OCI-LY7 (cell line): ENCODE measurements at regions of chr1 and their contacts with region 1.

Region 1: DNA sequence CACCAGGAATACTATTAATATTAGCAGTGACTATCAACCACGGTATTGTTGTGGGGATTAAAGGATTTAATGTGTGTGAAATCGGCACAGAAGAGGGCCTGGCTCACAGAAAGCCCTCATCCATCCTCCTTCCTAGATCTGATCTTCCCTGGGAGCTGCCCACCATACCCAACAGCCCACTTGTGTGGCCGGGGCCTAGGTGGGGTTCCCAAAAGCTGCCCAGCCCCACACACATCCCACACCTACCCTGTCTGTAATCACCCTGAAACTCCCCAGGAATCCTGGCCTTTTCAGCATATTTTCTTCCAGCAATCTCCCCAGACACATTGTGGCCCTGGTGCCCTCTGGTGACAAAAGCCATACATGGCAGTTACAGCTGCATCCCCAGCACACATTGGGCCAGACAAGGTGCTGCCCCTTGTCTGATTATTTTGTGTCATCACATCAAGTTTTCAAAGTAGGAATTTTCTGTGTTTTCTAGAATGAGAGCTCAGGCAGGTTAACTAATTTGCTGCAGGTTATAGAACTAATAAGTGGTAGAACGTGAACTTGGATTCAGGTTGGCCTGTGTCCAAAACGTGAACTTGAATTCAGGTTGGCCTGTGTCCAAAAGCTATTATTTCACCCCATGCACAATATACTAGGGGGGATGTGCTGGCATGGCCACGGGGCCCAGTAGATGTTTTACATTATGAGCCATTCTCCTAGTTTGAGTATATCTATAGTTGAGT is 5.3 kb upstream of the SLC6A9 start:
- DNase-seq: peak; percentile 74
- H3K4me3 ChIP-seq: no peak overlapping the region
- H3K27ac ChIP-seq: no peak overlapping the region
- H3K4me1 ChIP-seq: peaks cover 13% of the 10 kb centered on the region
- CTCF ChIP-seq: peak; percentile 91

Region 2: GRCh38 chr1:43529206-43529731 is 507.3 kb before region 1 on chr1:
- CTCF ChIA-PET with region 1: no interaction called
- POLR2A ChIA-PET with region 1: no interaction called
- intact Hi-C with region 1: loop called (anchors 5 kb)
- DNase-seq: peak; percentile 79
- H3K4me3 ChIP-seq: no peak overlapping the region
- H3K27ac ChIP-seq: no peak overlapping the region
- H3K4me1 ChIP-seq: peaks cover 3% of the 10 kb centered on the region
- CTCF ChIP-seq: peak; percentile 98

Region 3: GRCh38 chr1:44002606-44003157 is 33.9 kb before region 1 on chr1:
- CTCF ChIA-PET with region 1: interaction called, 13 read pairs
- POLR2A ChIA-PET with region 1: interaction called, 3 read pairs
- intact Hi-C with region 1: loop called (anchors 1 kb)
- DNase-seq: no peak
- H3K4me3 ChIP-seq: no peak overlapping the region
- H3K27ac ChIP-seq: no peak overlapping the region
- H3K4me1 ChIP-seq: no peaks in the 10 kb centered on the region
- CTCF ChIP-seq: peak; percentile 46; the same call in 1 of the 2 replicates